Mammary epithelial cell (primary cell): ENCODE measurements at regions of chr7 and their contacts with region 1.

Region 1: GRCh38 chr7:27576360-27576944 is 86.2 kb downstream of the HIBADH start:
- DNase-seq: peak; percentile 20
- H3K4me3 ChIP-seq: no peak overlapping the region
- H3K27ac ChIP-seq: no peak overlapping the region
- H3K4me1 ChIP-seq: no peaks in the 10 kb centered on the region
- H3K27me3 ChIP-seq: no peaks in the 10 kb centered on the region
- CTCF ChIP-seq: peak; percentile 49 to 50

Region 2: GRCh38 chr7:27210441-27211083 is 365.9 kb before region 1 on chr7:
- CTCF ChIA-PET with region 1: no interaction called
- dilution Hi-C with region 1: loop called (anchors 25 kb)
- in situ Hi-C with region 1: loop called (anchors 10 kb)
- intact Hi-C with region 1: loop called (anchors 1 kb)
- DNase-seq: peak; percentile 20
- H3K4me3 ChIP-seq: no peak overlapping the region
- H3K27ac ChIP-seq: no peak overlapping the region
- H3K4me1 ChIP-seq: no peaks in the 10 kb centered on the region
- H3K27me3 ChIP-seq: peaks cover 20% of the 10 kb centered on the region
- CTCF ChIP-seq: peak; percentile 53 to 78